Sigmoid colon (tissue), 7 donors: ENCODE measurements at regions of chr14 and their contacts with region 1.

Region 1: DNA sequence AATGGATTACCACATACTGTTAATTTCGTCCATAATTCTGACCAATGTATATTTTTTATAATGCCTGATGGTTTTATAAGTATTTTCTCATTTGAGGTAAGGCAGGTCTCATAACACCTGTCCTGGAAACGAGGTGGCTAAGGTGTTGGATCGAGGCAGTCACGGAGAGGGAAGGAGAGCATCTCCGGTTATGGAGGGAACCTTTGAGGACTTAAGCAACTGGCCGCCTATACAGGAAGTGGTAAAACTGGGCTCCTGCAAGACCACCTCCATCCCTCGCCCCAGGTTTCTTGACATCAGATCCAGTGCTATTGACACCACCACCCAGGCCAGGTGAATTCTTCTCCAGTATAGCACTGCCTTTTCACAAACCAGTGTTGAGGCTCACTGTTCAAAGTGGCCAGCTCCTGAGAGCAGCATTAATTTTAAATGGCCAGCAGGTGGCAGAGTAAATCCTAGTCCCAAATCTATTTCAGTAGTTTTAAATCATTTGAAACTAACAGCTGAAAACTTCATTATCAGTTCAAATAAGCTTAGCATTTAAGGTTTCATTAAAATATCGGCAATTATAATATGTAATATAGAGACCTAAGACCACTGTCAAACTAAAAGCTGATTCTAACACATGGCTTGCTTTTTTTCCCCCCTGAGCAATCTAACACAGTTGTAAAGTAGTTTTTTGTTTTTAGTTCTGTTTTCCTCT is 100.8 kb downstream of the PPM1A start:
- DNase-seq: no peak
- H3K4me3 ChIP-seq: no peak overlapping the region
- H3K27ac ChIP-seq: no peak overlapping the region
- H3K4me1 ChIP-seq: peaks cover 0 to 7% (median 3%) of the 10 kb centered on the region in 4 donors
- H3K27me3 ChIP-seq: no peaks in the 10 kb centered on the region
- CTCF ChIP-seq: peak; percentile 8 to 71 (median 44)
- EP300 ChIP-seq: no peak
- POLR2A ChIP-seq: no peak

Region 2: GRCh38 chr14:60561845-60562746 is 212.3 kb after region 1 on chr14:
- intact Hi-C with region 1: loop called (anchors 2 kb)
- DNase-seq: peak; percentile 67
- H3K4me3 ChIP-seq: no peak overlapping the region
- H3K27ac ChIP-seq: no peak overlapping the region
- H3K4me1 ChIP-seq: peaks cover 0 to 5% (median 0%) of the 10 kb centered on the region in 4 donors
- H3K27me3 ChIP-seq: no peaks in the 10 kb centered on the region
- CTCF ChIP-seq: peak; percentile 19 to 50 (median 32)
- EP300 ChIP-seq: no peak
- POLR2A ChIP-seq: no peak

Region 3: DNA sequence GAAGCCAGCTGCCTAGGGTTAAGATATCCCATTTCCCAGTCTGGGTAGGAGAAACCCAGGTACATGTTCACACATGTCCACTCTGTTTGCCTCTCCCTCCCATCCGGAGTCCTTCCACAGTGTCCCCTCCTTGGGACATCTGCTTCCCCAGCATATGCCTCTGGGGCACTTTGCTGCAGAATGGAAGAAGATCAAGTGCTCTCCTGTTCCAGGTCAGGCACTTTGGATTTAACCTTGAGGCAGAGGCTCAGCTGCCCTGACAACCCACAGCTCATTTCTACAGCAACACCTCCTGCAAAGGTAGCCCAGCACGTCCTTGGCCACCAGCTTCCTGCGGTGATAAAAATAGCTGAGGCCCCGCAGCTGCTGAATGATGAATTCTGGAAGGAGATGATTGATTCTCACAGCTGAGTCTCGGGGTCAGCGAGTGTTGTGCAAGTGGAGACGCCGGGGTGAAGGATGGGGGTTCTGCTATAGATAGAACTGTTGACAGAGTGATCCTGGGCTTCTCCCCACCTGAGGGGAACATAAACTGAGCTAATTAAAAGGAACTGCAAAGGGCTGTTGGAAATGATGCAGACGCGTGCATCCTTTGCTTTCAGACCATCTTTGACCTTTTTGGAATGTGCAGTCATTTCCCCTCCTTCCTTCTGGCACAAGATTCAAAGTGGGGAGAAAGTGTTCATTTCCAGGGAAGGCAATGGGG is 776.2 kb after region 1 on chr14:
- intact Hi-C with region 1: no loop called
- DNase-seq: no peak
- H3K4me3 ChIP-seq: no peak overlapping the region
- H3K27ac ChIP-seq: peak overlapping the region in 2 of 4 donors; percentile 14 to 29
- H3K4me1 ChIP-seq: peaks cover 0 to 12% (median 3%) of the 10 kb centered on the region in 4 donors
- H3K27me3 ChIP-seq: no peaks in the 10 kb centered on the region
- CTCF ChIP-seq: no peak
- EP300 ChIP-seq: no peak
- POLR2A ChIP-seq: no peak